ENCODE measurements at regions of chr2 and their contacts with region 1.

Region 1: GRCh38 chr2:15939854-15940660 is at the start of gene MYCN:
- DNase-seq: peak in 6 of 7 donors; percentile 15 to 76 (median 50)
- H3K4me3 ChIP-seq: peak within 1 kb of the TSS in 2 of 4 donors; percentile 24 to 48
- H3K27ac ChIP-seq: no peak within 1 kb of the TSS
- H3K4me1 ChIP-seq: peaks cover 19 to 30% of the 10 kb centered on the region in 2 donors
- H3K27me3 ChIP-seq: peaks cover 35% of the 10 kb centered on the region
- CTCF ChIP-seq: peak in 4 of 6 experiments; percentile 65 to 85 (median 78)
- POLR2A ChIP-seq: no peak
- total RNA-seq, gene MYCN: 0.24 to 2.2 (median 1.4) TPM

Region 2: GRCh38 chr2:16507655-16508489 is 567.8 kb after region 1 on chr2:
- intact Hi-C with region 1: loop called (anchors 5 to 10 kb)
- DNase-seq: peak in 6 of 7 donors; percentile 45 to 56 (median 53)
- H3K4me3 ChIP-seq: peak overlapping the region in 2 of 4 donors; percentile 30 to 54
- H3K27ac ChIP-seq: no peak overlapping the region
- H3K4me1 ChIP-seq: peaks cover 7 to 9% of the 10 kb centered on the region in 2 donors
- H3K27me3 ChIP-seq: peaks cover 26% of the 10 kb centered on the region
- CTCF ChIP-seq: peak; percentile 21 to 73 (median 52)
- POLR2A ChIP-seq: no peak